ENCODE measurements at regions of chr12 and their contacts with region 1.

Region 1: DNA sequence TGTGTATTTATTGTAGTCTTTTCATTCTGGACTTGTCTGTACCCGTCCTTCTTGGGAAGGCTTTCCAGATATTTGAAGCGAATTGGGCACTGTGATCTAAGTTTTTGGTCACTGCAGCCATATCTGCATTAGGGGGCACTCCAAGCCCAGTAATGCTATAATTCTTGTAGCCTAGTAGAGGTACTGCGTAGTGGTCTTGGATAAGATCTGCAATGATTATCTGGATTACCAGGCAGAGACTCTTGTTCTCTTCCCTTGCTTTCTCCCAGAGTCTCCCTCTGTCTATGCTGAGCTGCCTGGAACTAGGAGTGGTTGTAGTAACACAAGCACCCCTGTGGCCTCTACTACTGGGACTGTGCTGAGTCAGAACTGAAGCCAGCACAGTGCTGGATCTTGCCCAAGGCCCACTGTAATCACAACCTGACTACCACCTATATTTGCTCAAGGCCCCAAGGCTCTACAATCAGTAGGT is 30.0 kb downstream of the SLC38A2 start:
- DNase-seq: peak in 4 of 10 donors; percentile 5 to 41 (median 16)

Region 2: GRCh38 chr12:46661110-46661845 is 318.7 kb after region 1 on chr12:
- intact Hi-C with region 1: loop called (anchors 5 kb)
- DNase-seq: no peak

Region 3: DNA sequence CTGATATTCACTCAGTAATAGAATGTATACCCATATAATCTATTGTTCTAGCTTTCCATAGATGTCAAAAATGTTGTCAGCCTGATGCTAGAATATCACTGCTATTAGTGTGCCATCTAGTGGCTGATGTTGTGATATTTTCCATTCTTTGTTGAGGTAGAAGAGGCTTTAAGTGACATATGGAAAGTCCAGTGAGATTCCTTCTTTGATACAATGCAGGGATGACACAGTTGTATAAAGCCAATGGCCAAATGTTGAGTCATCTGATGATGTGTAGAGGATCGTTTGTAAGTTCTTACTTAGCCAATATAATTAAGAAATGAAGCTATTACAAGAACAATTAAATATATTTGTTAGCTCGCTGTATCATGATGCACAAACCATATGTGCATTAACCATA is 678.7 kb after region 1 on chr12:
- intact Hi-C with region 1: loop called (anchors 5 kb)
- DNase-seq: no peak

Measured in posterior cingulate gyrus (tissue), 11 donors.